ENCODE measurements at regions of chr15 and their contacts with region 1.

Region 1: DNA sequence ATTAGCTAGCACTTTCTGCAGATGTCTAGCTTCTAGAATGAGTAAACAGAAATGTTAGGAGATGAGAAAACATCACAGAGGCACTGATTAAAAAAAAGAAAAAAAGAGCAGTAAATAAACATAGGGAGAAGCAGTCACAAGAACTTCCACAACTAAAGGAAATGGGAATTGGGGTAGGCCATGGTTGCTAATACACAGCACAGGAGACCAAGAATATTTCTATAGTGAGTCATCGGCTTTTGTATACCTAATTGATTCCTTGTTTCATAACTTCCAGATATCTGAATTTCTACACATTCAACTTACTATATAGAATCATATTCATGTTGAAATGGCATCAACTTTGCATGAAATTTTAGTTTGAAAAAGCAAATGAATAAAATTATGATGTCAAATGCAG is 47.3 kb upstream of the TCF12 start:
- DNase-seq: peak; percentile 80
- ATAC-seq: peak; percentile 97
- H3K4me3 ChIP-seq: no peak overlapping the region
- H3K27ac ChIP-seq: no peak overlapping the region
- H3K4me1 ChIP-seq: peaks cover 9% of the 10 kb centered on the region
- H3K27me3 ChIP-seq: no peaks in the 10 kb centered on the region
- CTCF ChIP-seq: no peak

Region 2: GRCh38 chr15:56832125-56832524 is 39.1 kb before region 1 on chr15:
- CTCF ChIA-PET with region 1: no interaction called
- POLR2A ChIA-PET with region 1: no interaction called
- intact Hi-C with region 1: loop called (anchors 1 kb)
- DNase-seq: peak; percentile 78
- ATAC-seq: peak; percentile 93
- H3K4me3 ChIP-seq: no peak overlapping the region; the same call in 1 of the 2 replicates
- H3K27ac ChIP-seq: peak overlapping the region; percentile 39; the same call in 1 of the 2 replicates
- H3K4me1 ChIP-seq: peaks cover 14% of the 10 kb centered on the region
- H3K27me3 ChIP-seq: no peaks in the 10 kb centered on the region
- CTCF ChIP-seq: no peak